Activated CD4-positive, alpha-beta T cell treated with anti-CD3 and anti-CD28 coated beads, Interleukin-2, amount 10 ng/mL, durations not matched to agents 24 days and 14 days (primary cell): ENCODE measurements at regions of chr4 and their contacts with region 1.

Region 1: DNA sequence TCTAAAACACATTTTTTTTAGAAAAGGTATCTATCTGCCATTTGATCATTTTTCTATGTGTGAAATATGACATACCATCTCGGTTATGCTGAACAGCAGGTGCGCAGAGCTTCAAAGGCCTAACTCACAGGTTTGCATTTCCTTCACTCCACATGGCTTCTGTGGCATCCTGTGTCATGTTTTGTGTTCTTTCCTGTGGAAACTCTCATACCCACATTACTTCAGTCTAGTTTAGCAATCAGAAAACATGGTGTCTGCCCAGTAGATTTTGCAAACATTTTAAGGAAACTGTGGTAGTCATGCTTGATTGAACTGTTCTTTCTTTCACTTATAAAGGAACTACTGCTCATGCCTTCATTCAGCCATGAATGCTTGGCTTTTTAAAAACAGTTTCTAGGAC is 11.3 kb upstream of the ARAP2 start:
- DNase-seq: peak; percentile 91
- H3K4me3 Mint-ChIP-seq: peak overlapping the region; percentile 70
- H3K27ac Mint-ChIP-seq: peak overlapping the region; percentile 91
- H3K4me1 Mint-ChIP-seq: peaks cover 28% of the 10 kb centered on the region
- H3K27me3 Mint-ChIP-seq: no peaks in the 10 kb centered on the region

Region 2: GRCh38 chr4:36269101-36269500 is 13.5 kb after region 1 on chr4:
- intact Hi-C with region 1: loop called (anchors 1 kb)
- DNase-seq: peak; percentile 83
- H3K4me3 Mint-ChIP-seq: no peak overlapping the region
- H3K27ac Mint-ChIP-seq: peak overlapping the region; percentile 54
- H3K4me1 Mint-ChIP-seq: peaks cover 43% of the 10 kb centered on the region
- H3K27me3 Mint-ChIP-seq: no peaks in the 10 kb centered on the region

Region 3: DNA sequence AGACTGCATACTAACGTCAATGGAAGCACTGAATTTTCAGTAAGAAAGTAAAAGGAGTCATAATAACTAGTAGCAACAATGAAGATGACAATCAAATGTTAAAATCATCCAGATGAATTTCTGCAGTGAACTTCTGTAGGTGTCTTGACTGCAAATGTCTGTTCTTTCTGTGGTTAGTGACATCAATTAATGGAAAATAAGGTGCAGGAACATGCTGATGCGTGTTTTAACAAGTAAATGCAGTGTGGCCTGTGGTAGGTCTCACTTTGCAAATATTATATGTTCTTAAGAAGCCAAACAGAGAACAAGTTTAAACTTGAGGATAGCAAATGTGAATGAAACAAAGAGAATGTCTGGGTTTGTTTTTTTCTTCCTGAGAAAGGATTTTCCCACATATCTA is 23.2 kb after region 1 on chr4:
- intact Hi-C with region 1: loop called (anchors 1 kb)
- DNase-seq: no peak
- H3K4me3 Mint-ChIP-seq: peak overlapping the region; percentile 67
- H3K27ac Mint-ChIP-seq: peak overlapping the region; percentile 80
- H3K4me1 Mint-ChIP-seq: peaks cover 68% of the 10 kb centered on the region
- H3K27me3 Mint-ChIP-seq: no peaks in the 10 kb centered on the region

Region 4: DNA sequence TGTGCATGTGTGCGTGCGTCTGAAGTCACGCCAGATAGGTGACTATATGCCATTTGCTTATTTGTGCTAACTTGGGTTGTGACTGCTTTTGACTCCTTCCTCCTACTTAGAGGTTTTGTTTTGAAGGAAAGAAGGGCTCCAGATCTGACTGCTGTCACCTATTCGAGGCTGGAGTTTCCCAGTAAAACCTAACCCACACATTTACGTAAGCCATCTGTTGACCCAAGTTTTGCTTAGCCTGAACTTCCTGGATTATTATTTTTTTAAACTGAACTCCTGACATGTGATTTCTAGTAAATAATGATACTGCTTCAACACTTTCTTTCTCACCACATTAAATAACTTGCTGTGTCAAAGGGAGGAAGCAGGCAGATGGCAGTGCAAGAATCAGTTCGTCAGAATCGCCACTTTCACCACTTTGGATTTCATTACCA is 67.4 kb after region 1 on chr4:
- intact Hi-C with region 1: loop called (anchors 1 kb)
- DNase-seq: peak; percentile 90
- H3K4me3 Mint-ChIP-seq: peak overlapping the region; percentile 21
- H3K27ac Mint-ChIP-seq: peak overlapping the region; percentile 93
- H3K4me1 Mint-ChIP-seq: peaks cover 71% of the 10 kb centered on the region
- H3K27me3 Mint-ChIP-seq: no peaks in the 10 kb centered on the region